HAP-1 (cell line): ENCODE measurements at regions of chr5 and their contacts with region 1.

Region 1: GRCh38 chr5:135887351-135887864 is 8.2 kb downstream of the IL9 start:
- DNase-seq: peak; percentile 70 to 78
- H3K4me3 ChIP-seq: no peak overlapping the region
- H3K4me1 ChIP-seq: peaks cover 5% of the 10 kb centered on the region; the same call in 1 of the 2 replicates
- H3K27me3 ChIP-seq: no peaks in the 10 kb centered on the region

Region 2: DNA sequence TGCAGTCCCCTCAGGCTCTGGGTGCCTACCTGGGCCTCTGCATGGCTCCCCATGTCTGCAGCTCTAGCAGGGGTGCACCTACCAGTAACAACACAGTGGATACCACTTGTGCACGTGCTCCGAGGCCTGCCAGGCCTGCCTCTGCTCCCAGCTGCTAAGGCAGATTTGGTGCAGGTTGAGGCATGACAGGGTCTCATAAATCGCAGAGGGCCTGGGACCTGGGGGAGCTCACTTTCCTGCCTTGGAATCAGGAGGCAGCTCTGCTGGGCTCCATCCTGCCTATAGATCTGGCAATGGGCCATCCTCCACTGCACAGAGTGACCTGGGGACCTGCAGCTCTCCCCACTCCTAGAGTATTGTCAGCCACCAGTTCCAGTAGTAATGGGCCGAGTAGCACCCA is 186.7 kb before region 1 on chr5:
- in situ Hi-C with region 1: no loop called
- DNase-seq: no peak
- H3K4me3 ChIP-seq: no peak overlapping the region
- H3K4me1 ChIP-seq: no peaks in the 10 kb centered on the region
- H3K27me3 ChIP-seq: no peaks in the 10 kb centered on the region

Region 3: DNA sequence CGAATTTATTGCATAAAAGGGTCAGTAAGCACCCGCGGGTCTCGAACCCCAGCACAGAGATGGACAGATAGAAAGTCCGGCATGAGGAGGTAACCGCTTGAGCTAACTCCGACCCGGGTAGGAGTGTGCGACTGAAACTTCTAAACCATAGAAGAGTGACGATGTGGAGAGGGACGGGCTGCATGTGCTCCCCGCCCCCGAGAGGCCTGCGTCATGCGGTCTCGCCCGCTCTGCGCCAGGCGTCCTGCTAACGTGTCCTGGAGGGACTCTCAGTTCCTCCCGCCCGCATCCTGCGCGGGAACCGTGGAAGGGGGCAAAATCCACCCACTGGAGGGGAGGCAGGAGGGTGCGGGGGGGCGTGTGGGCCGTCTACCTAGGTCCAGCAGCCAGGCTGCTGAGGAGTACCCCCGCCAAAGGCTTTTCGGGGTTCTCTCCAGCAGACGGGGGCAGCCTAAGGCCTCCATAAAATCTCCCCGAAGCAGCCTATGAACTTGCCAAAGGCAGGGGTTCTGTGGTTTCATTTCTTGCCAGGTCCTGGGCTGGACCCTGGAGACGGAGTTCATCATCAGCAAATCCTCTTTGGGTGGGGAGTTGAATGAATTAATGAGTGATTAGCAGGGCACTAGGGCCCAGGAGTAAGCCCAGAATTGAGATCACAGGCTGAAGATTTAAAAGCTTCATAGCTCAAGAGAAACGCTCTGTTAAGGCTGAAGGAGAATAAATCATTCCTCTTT is 193.2 kb after region 1 on chr5:
- in situ Hi-C with region 1: loop called (anchors 5 kb)
- DNase-seq: no peak
- H3K4me3 ChIP-seq: no peak overlapping the region
- H3K4me1 ChIP-seq: no peaks in the 10 kb centered on the region
- H3K27me3 ChIP-seq: no peaks in the 10 kb centered on the region; the same call in 1 of the 2 replicates

Region 4: DNA sequence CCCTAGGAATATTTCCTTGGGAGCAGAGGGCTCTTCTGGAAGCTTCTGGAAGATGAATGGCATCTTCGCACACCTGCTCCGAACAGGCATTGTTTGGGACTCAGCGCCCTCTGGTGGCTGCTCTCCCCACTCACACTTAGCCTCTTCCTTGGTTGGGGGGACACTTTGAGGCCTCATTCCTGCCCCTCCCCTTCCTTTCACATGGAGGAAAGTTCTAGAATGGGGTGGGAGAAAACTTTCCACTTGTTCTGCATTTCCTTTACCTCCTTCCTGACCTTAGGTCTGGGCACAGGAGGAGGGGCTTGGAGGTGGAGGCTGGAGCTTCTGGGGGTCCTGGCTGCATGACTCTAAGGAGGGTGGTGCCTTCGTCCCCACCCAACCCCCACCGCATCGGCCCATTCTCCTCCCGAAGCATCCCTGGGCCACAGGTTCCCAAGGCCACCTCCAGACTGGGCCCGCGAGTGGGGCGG is 324.9 kb after region 1 on chr5:
- in situ Hi-C with region 1: loop called (anchors 5 kb)
- DNase-seq: peak; percentile 35 to 79
- H3K4me3 ChIP-seq: no peak overlapping the region
- H3K4me1 ChIP-seq: no peaks in the 10 kb centered on the region
- H3K27me3 ChIP-seq: no peaks in the 10 kb centered on the region; the same call in 1 of the 2 replicates

Region 5: GRCh38 chr5:136242136-136242535 is 354.7 kb after region 1 on chr5:
- in situ Hi-C with region 1: no loop called
- DNase-seq: no peak
- H3K4me3 ChIP-seq: no peak overlapping the region
- H3K4me1 ChIP-seq: no peaks in the 10 kb centered on the region
- H3K27me3 ChIP-seq: no peaks in the 10 kb centered on the region